Left ventricle myocardium inferior (tissue), 1 donor: ENCODE measurements at regions of chr5 and their contacts with region 1.

Region 1: GRCh38 chr5:32489791-32490582 is 45.4 kb upstream of the ZFR start:
- DNase-seq: peak; percentile 82
- H3K4me3 ChIP-seq: no peak overlapping the region
- H3K27ac ChIP-seq: peak overlapping the region; percentile 17
- H3K4me1 ChIP-seq: peaks cover 9% of the 10 kb centered on the region
- H3K27me3 ChIP-seq: no peaks in the 10 kb centered on the region
- CTCF ChIP-seq: peak; percentile 85

Region 2: GRCh38 chr5:32589942-32590869 is 100.2 kb after region 1 on chr5:
- intact Hi-C with region 1: loop called (anchors 5 kb)
- DNase-seq: no peak
- H3K4me3 ChIP-seq: no peak overlapping the region
- H3K27ac ChIP-seq: no peak overlapping the region
- H3K4me1 ChIP-seq: peaks cover 49% of the 10 kb centered on the region
- H3K27me3 ChIP-seq: no peaks in the 10 kb centered on the region
- CTCF ChIP-seq: peak; percentile 86

Region 3: DNA sequence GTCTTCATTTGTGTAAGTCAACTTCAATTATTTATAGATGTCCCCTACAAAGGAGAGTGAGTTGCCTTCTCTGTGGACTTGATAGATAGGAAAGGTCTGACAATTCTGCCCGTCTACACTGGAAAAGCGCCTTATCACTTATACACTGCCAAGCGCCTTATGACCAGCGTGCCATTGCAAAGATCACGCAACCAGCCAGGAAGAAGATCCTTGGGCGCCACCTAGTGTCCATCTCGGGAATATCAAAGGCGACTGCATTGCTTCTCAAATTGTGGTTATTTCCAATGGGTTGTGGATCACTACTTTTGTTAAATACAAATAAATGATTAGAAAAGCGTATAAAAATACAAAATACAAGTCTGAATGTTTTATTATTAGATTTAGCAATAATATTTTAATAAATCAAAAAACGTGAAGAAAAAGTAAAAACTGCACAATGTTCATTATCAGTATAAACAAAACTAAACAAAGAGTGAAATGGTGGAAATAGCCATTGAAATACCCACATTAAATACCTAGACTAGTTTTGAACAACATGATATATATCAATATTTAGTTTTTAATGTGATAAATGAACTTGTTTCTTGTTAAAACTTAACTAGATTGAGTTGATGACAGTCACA is 123.2 kb after region 1 on chr5:
- intact Hi-C with region 1: loop called (anchors 2 kb)
- DNase-seq: peak; percentile 77
- H3K4me3 ChIP-seq: no peak overlapping the region
- H3K27ac ChIP-seq: peak overlapping the region; percentile 49
- H3K4me1 ChIP-seq: peaks cover 36% of the 10 kb centered on the region
- H3K27me3 ChIP-seq: no peaks in the 10 kb centered on the region
- CTCF ChIP-seq: peak; percentile 91